Breast epithelium (tissue), 4 donors: ENCODE measurements at regions of chr4 and their contacts with region 1.

Region 1: GRCh38 chr4:79148369-79148768 is 177.5 kb downstream of the NAA11 start:
- DNase-seq: no peak
- H3K4me3 ChIP-seq: no peak overlapping the region
- H3K27ac ChIP-seq: no peak overlapping the region
- H3K4me1 ChIP-seq: no peaks in the 10 kb centered on the region
- H3K27me3 ChIP-seq: no peaks in the 10 kb centered on the region
- CTCF ChIP-seq: no peak
- POLR2A ChIP-seq: no peak

Region 2: DNA sequence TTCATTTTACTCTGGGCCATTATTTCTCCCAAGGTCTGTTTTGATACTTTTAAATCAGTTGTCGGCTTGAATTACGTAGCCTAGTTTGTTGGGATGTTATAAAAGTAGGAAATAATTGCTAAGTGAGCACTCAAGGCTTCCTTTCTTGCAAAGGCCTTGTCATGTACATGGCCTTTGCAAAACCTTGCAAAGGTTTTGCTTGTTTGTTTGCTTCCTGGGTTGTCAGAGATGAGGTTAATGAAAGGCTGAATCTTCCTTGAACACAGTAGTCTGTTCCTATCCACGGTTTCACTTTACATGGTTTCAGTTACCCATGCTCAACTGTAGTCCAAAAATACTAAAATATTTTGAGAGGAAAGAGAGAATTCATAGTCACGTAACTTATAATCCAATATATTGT is 63.9 kb after region 1 on chr4:
- intact Hi-C with region 1: loop called (anchors 2 kb)
- DNase-seq: no peak
- H3K4me3 ChIP-seq: no peak overlapping the region
- H3K27ac ChIP-seq: no peak overlapping the region
- H3K4me1 ChIP-seq: no peaks in the 10 kb centered on the region
- H3K27me3 ChIP-seq: no peaks in the 10 kb centered on the region
- CTCF ChIP-seq: no peak
- POLR2A ChIP-seq: no peak